Activated CD4-positive, alpha-beta T cell treated with anti-CD3 and anti-CD28 coated beads, Interleukin-2, amount 10 ng/mL, durations not matched to agents 7 days and 5 days (primary cell): ENCODE measurements at regions of chr14 and their contacts with region 1.

Region 1: GRCh38 chr14:64636208-64636979 is 67.8 kb upstream of the PLEKHG3 start:
- DNase-seq: peak; percentile 69
- H3K4me3 Mint-ChIP-seq: no peak overlapping the region
- H3K27ac Mint-ChIP-seq: no peak overlapping the region
- H3K4me1 Mint-ChIP-seq: peaks cover 4% of the 10 kb centered on the region
- H3K27me3 Mint-ChIP-seq: peaks cover 17% of the 10 kb centered on the region

Region 2: GRCh38 chr14:64410084-64410774 is 226.2 kb before region 1 on chr14:
- CTCF ChIA-PET with region 1: no interaction called
- POLR2A ChIA-PET with region 1: no interaction called
- DNase-seq: no peak
- H3K4me3 Mint-ChIP-seq: no peak overlapping the region
- H3K27ac Mint-ChIP-seq: no peak overlapping the region
- H3K4me1 Mint-ChIP-seq: peaks cover 25% of the 10 kb centered on the region
- H3K27me3 Mint-ChIP-seq: no peaks in the 10 kb centered on the region

Region 3: DNA sequence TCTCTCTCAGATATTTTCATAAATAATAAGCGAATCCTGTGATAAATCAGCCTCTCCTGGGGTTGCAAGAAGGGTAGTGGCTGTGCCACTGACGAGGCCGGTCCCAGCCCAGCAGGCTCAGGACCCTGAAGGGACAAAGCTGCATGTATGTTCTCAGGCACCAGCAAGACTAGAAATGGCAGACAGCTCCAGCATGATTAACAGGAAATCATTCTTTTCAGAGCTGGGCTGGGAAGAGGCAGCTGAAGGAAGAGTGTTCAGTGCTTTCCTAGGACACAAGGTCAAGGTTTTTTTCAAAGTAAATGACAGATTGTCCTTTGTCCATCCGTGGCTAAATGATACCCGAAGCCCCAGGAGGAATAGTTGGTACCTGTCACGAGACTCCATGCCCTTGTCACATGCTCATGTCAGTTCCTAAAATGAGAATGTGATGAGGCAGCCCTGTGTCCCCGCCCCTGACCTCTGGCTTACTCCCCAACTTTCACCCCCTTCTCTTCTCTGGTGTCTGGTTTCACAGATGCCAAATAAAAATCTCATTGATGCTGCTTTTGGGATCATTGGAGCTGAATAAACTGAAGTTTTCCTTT is 21.5 kb before region 1 on chr14:
- CTCF ChIA-PET with region 1: interaction called, 14 read pairs
- POLR2A ChIA-PET with region 1: no interaction called
- DNase-seq: no peak
- H3K4me3 Mint-ChIP-seq: no peak overlapping the region
- H3K27ac Mint-ChIP-seq: no peak overlapping the region
- H3K4me1 Mint-ChIP-seq: no peaks in the 10 kb centered on the region
- H3K27me3 Mint-ChIP-seq: peaks cover 7% of the 10 kb centered on the region